GM10248 (cell line): ENCODE measurements at regions of chr11 and their contacts with region 1.

Region 1: GRCh38 chr11:33912405-33913361 is 20.8 kb upstream of the LMO2 start:
- DNase-seq: peak; percentile 67
- CTCF ChIP-seq: no peak

Region 2: GRCh38 chr11:33899383-33900037 is 13.2 kb before region 1 on chr11:
- CTCF ChIA-PET with region 1: interaction called, 12 read pairs
- POLR2A ChIA-PET with region 1: no interaction called
- DNase-seq: no peak
- CTCF ChIP-seq: no peak